ENCODE measurements at regions of chr4 and their contacts with region 1.

Region 1: GRCh38 chr4:8185930-8186329 is 13.2 kb upstream of the SH3TC1 start:
- DNase-seq: no peak
- ATAC-seq: no peak
- H3K4me3 ChIP-seq: no peak overlapping the region
- H3K27ac ChIP-seq: no peak overlapping the region
- H3K4me1 ChIP-seq: peaks cover 20 to 62% of the 10 kb centered on the region in 2 experiments
- H3K27me3 ChIP-seq: no peaks in the 10 kb centered on the region
- CTCF ChIP-seq: no peak
- POLR2A ChIP-seq: no peak
- RAD21 ChIP-seq: no peak

Region 2: DNA sequence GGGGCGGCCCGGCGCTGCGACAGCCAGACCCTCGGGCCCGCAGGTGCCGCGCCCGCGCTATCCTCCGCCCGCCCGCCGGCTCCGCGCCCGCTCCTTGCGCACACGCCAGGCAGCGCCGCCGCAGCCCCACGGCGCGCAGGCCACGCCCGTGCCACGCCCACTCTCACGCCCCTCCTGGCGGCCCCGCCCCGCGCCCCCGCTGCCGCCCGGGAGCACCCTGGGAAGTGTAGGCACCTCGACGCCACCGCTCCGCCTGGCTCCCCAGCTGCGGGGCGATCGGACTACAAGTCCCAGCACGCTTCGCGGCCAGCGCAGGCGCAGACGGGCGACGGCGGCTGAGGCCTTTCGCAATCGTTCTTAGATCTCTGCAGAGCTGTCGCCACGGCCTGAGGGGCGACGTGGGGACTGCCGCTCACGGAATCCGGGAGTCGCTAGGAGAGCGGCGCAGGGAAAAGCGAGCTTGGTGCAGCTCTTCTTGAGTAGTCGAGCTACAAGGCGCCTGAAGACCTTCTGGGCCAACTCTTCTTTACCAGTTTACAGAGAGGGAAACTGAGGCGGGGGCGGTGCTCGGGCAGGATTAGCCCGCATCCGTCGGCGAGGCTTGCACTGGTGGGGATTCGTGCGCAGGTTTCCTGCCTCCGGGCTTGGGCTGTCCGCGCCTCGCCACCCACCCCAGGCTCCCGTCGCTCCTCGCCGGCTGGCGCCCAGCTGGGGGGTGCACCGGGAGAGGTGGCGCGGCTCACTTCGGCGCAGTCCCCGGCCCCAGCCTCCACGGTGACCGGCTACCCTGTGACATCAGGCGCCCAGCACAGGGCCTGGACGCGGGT is 27.0 kb before region 1 on chr4 and contains the start of gene ABLIM2:
- CTCF ChIA-PET with region 1: no interaction called
- POLR2A ChIA-PET with region 1: no interaction called
- RAD21 ChIA-PET with region 1: no interaction called
- intact Hi-C with region 1: loop called (anchors 2 kb)
- DNase-seq: peak; percentile 91
- ATAC-seq: peak; percentile 98
- H3K4me3 ChIP-seq: peak within 1 kb of the TSS; percentile 57 to 74
- H3K27ac ChIP-seq: peak within 1 kb of the TSS; percentile 42; the same call in 1 of the 2 replicates
- H3K4me1 ChIP-seq: peaks cover 10 to 30% of the 10 kb centered on the region in 2 experiments
- H3K27me3 ChIP-seq: no peaks in the 10 kb centered on the region
- CTCF ChIP-seq: no peak
- POLR2A ChIP-seq: peak; percentile 56
- RAD21 ChIP-seq: no peak
- total RNA-seq, gene ABLIM2: 6.1 TPM

Measured in HCT116 (cell line).